ENCODE measurements at regions of chr15 and their contacts with region 1.

Region 1: GRCh38 chr15:97234851-97235610 is 725.5 kb upstream of the ARRDC4 start:
- DNase-seq: peak; percentile 15
- ATAC-seq: peak; percentile 79
- H3K4me3 ChIP-seq: no peak overlapping the region
- H3K27ac ChIP-seq: no peak overlapping the region
- H3K4me1 ChIP-seq: no peaks in the 10 kb centered on the region
- H3K27me3 ChIP-seq: no peaks in the 10 kb centered on the region
- CTCF ChIP-seq: peak; percentile 30 to 78 (median 72); a peak in 5 of 6 replicates
- POLR2A ChIP-seq: no peak
- RAD21 ChIP-seq: peak; percentile 73

Region 2: DNA sequence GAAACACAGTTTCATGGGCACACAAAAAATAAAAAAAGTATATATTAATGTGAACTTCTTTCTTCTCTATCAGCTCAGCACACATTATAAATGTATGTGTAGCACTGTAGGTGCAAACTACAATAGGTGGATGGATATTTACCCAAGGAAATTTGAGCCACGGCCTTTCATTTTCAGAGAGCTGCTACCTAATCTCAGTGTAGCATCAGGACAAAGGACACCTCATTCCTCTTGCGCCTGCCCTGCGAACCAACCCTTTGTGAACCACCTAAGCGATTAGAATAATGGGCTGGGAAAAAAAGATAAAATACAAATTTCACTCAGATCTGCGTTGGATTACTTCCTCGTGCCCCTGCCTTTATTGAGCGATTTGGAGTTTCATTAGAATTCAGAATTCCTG is 641.3 kb before region 1 on chr15:
- CTCF ChIA-PET with region 1: no interaction called
- POLR2A ChIA-PET with region 1: no interaction called
- RAD21 ChIA-PET with region 1: no interaction called
- intact Hi-C with region 1: loop called (anchors 10 kb)
- DNase-seq: no peak
- ATAC-seq: no peak
- H3K4me3 ChIP-seq: no peak overlapping the region
- H3K27ac ChIP-seq: no peak overlapping the region
- H3K4me1 ChIP-seq: no peaks in the 10 kb centered on the region
- H3K27me3 ChIP-seq: peaks cover 53% of the 10 kb centered on the region
- CTCF ChIP-seq: no peak
- POLR2A ChIP-seq: no peak
- RAD21 ChIP-seq: no peak

Region 3: GRCh38 chr15:96792216-96792615 is 442.8 kb before region 1 on chr15:
- CTCF ChIA-PET with region 1: no interaction called
- POLR2A ChIA-PET with region 1: no interaction called
- RAD21 ChIA-PET with region 1: no interaction called
- intact Hi-C with region 1: no loop called
- DNase-seq: no peak
- ATAC-seq: no peak
- H3K4me3 ChIP-seq: no peak overlapping the region
- H3K27ac ChIP-seq: no peak overlapping the region
- H3K4me1 ChIP-seq: no peaks in the 10 kb centered on the region
- H3K27me3 ChIP-seq: no peaks in the 10 kb centered on the region
- CTCF ChIP-seq: no peak
- POLR2A ChIP-seq: no peak
- RAD21 ChIP-seq: no peak